Activated B cell treated with CpG ODN at 0.5 μM for 24 hours (primary cell): ENCODE measurements at regions of chr3 and their contacts with region 1.

Region 1: GRCh38 chr3:72118628-72119027 is 333.7 kb upstream of the PROK2 start:
- DNase-seq: no peak
- ATAC-seq: no peak
- H3K4me3 Mint-ChIP-seq: no peak overlapping the region
- H3K27ac Mint-ChIP-seq: no peak overlapping the region
- H3K4me1 Mint-ChIP-seq: peaks cover 4% of the 10 kb centered on the region
- H3K27me3 Mint-ChIP-seq: no peaks in the 10 kb centered on the region
- CTCF ChIP-seq: no peak

Region 2: DNA sequence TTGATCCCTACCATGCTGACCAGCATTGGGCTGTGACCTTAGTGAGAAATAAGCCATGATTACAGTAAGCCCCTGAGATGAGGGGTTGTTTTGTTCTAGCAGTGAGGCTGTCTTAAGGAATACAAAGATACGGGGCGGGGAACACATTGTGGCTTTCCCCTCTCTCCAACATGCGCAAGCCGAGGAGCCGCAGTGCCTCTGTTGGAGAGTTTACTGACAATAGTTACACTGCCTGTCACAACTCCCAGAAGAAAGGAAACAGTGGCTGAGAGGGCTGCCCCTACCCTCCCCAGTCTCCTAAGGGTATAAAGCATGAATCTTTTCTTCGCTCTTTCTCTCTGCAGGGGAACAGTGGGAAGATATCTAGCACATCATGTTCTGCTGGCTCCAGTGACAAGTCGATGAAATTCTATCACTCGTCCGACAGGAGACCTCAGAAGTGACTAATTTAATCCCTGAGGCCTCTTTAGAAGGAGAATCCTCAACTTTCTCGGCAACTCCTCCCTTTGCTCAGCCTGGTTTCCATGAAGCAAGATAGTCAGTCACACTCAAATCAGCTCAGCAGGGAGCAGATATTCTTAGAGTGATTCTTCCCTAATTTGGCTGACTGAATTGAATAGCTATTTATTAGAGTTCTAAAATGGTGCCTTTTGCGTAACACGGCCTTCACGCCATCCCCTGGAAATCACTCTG is 75.3 kb after region 1 on chr3:
- CTCF ChIA-PET with region 1: no interaction called
- POLR2A ChIA-PET with region 1: interaction called, 17 read pairs
- intact Hi-C with region 1: no loop called
- DNase-seq: no peak
- ATAC-seq: no peak
- H3K4me3 Mint-ChIP-seq: no peak overlapping the region
- H3K27ac Mint-ChIP-seq: no peak overlapping the region
- H3K4me1 Mint-ChIP-seq: no peaks in the 10 kb centered on the region
- H3K27me3 Mint-ChIP-seq: no peaks in the 10 kb centered on the region
- CTCF ChIP-seq: no peak

Region 3: GRCh38 chr3:72673011-72673771 is 554.6 kb after region 1 on chr3:
- CTCF ChIA-PET with region 1: no interaction called
- POLR2A ChIA-PET with region 1: no interaction called
- intact Hi-C with region 1: no loop called
- DNase-seq: peak; percentile 19
- ATAC-seq: peak; percentile 79
- H3K4me3 Mint-ChIP-seq: no peak overlapping the region
- H3K27ac Mint-ChIP-seq: no peak overlapping the region
- H3K4me1 Mint-ChIP-seq: peaks cover 18% of the 10 kb centered on the region
- H3K27me3 Mint-ChIP-seq: peaks cover 6% of the 10 kb centered on the region
- CTCF ChIP-seq: no peak